Right ventricle myocardium inferior (tissue), 1 donor: ENCODE measurements at regions of chr11 and their contacts with region 1.

Region 1: GRCh38 chr11:22221143-22221542 is 28.3 kb downstream of the ANO5 start:
- DNase-seq: no peak
- ATAC-seq: no peak

Region 2: GRCh38 chr11:22065472-22065871 is 155.7 kb before region 1 on chr11:
- intact Hi-C with region 1: no loop called
- DNase-seq: no peak
- ATAC-seq: no peak

Region 3: DNA sequence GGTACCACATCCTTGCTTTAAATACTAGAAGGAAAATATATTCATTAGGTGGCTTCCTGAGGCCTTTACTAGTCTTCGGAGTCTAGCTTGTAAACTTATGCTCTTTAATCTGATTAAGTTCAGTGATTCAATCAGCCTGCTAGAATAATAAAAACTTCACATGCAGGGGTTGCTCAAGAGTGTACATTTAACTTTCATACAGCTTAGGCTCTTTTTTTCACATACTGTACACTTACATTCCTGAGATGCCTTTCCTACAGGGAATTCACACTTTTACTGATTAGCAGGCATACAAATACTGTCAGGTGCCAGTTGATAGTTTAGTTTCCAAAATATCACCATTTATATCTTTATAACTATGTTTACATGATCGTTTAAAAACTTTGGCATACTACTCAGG is 31.5 kb before region 1 on chr11:
- intact Hi-C with region 1: loop called (anchors 5 kb)
- DNase-seq: no peak
- ATAC-seq: no peak

Region 4: GRCh38 chr11:22930816-22931594 is 709.9 kb after region 1 on chr11:
- intact Hi-C with region 1: no loop called
- DNase-seq: no peak
- ATAC-seq: no peak